Activated CD8-positive, alpha-beta T cell treated with anti-CD3 and anti-CD28 coated beads, Interleukin-2, amount 10 ng/mL, durations not matched to agents 7 days and 5 days (primary cell): ENCODE measurements at regions of chr10 and their contacts with region 1.

Region 1: DNA sequence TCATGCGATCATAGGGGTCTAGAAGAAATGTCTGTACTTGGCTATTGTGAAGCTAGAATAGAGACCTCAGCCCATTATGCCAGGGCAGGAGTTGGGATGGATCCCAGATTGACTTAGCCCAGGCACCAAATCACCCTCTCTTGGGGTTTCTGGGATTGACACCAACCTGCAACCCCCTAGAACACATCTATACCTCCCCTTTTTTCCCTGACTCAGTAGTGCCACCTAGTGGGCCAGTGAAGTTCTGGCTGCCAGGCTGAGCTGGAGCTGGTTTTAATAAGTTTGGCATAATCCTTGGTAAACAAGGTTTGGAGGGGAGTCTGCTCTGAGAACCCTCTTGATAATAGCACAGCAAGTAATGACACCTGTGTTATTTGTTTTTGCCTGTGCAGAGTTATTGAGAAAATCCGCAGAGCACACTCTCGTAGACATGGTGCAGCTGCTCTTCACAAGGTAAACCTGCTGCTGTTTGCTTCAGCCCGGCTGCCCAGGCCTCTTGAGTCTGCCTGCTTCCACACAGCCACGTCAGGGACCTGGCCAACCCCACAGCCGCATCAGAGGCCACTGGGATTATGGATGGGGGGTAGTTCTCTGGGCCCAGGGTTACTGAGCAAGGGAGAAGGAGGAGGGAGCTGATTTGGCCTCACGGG is 43.3 kb upstream of the NFKB2 start:
- DNase-seq: peak; percentile 81
- ATAC-seq: peak; percentile 78
- H3K4me3 Mint-ChIP-seq: no peak overlapping the region
- H3K27ac Mint-ChIP-seq: no peak overlapping the region
- H3K4me1 Mint-ChIP-seq: no peaks in the 10 kb centered on the region
- H3K27me3 Mint-ChIP-seq: no peaks in the 10 kb centered on the region

Region 2: GRCh38 chr10:102167861-102168260 is 184.3 kb before region 1 on chr10:
- CTCF ChIA-PET with region 1: interaction called, 101 read pairs
- POLR2A ChIA-PET with region 1: no interaction called
- DNase-seq: no peak
- ATAC-seq: no peak
- H3K4me3 Mint-ChIP-seq: no peak overlapping the region
- H3K27ac Mint-ChIP-seq: no peak overlapping the region
- H3K4me1 Mint-ChIP-seq: peaks cover 12% of the 10 kb centered on the region
- H3K27me3 Mint-ChIP-seq: no peaks in the 10 kb centered on the region

Region 3: GRCh38 chr10:102268375-102268888 is 83.8 kb before region 1 on chr10:
- CTCF ChIA-PET with region 1: interaction called, 11 read pairs
- POLR2A ChIA-PET with region 1: no interaction called
- DNase-seq: no peak
- ATAC-seq: peak; percentile 39
- H3K4me3 Mint-ChIP-seq: no peak overlapping the region
- H3K27ac Mint-ChIP-seq: peak overlapping the region; percentile 19
- H3K4me1 Mint-ChIP-seq: peaks cover 44% of the 10 kb centered on the region
- H3K27me3 Mint-ChIP-seq: no peaks in the 10 kb centered on the region

Region 4: DNA sequence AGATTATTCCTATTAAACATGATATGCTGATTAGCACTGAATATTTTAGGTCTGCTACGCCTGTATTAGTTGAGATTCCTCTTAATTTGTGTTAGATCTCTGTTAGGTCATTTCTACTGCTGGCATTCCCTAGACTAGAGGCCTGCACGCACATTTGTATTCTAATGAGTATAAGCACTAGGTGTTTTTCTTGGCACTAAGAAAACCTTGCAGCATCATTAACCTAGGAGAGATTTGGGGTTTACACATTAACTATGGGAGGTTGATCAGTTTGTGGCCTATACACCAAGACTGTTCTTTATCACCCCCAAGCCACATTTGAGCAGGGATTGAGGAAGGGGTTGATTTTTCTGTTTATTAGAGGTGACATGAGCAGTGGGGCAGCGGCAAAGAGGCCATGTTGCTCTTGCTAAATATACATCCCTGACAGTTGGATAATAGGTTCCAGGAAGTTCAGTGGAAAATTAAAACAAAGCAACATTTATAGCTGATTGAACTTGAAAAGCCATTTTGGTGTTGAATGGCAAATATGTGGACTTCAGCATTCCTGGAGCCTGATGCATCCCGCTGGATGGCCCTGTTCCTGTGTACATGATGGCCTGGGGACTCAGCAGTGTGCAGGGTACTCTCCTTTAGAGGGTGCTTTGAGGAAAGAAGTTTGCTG is 41.7 kb before region 1 on chr10:
- CTCF ChIA-PET with region 1: interaction called, 23 read pairs
- POLR2A ChIA-PET with region 1: no interaction called
- DNase-seq: no peak
- ATAC-seq: no peak
- H3K4me3 Mint-ChIP-seq: no peak overlapping the region
- H3K27ac Mint-ChIP-seq: no peak overlapping the region
- H3K4me1 Mint-ChIP-seq: peaks cover 33% of the 10 kb centered on the region
- H3K27me3 Mint-ChIP-seq: no peaks in the 10 kb centered on the region

Region 5: GRCh38 chr10:102334101-102334500 is 18.1 kb before region 1 on chr10:
- CTCF ChIA-PET with region 1: interaction called, 23 read pairs
- POLR2A ChIA-PET with region 1: interaction called, 4 read pairs
- DNase-seq: no peak
- ATAC-seq: no peak
- H3K4me3 Mint-ChIP-seq: no peak overlapping the region
- H3K27ac Mint-ChIP-seq: no peak overlapping the region
- H3K4me1 Mint-ChIP-seq: no peaks in the 10 kb centered on the region
- H3K27me3 Mint-ChIP-seq: no peaks in the 10 kb centered on the region

Region 6: DNA sequence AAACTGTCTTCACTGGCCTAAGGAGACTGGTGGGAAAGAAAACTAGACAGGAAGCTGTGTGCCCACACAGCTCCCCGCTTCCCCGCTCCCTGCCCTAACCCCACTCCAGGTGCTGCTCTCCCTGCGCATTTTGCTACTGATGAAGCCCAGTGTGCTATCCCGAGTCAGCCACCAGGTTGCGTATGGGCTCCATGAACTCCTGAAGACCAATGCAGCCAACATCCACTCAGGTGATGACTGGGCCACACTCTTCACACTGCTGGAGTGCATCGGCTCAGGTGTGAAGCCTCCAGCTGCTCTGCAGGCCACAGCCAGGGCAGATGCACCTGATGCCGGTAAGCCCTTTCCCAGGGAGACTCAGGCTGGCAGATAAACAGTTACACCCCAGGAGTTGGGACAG is 23.1 kb after region 1 on chr10:
- CTCF ChIA-PET with region 1: interaction called, 10 read pairs
- POLR2A ChIA-PET with region 1: no interaction called
- DNase-seq: no peak
- ATAC-seq: peak; percentile 57
- H3K4me3 Mint-ChIP-seq: no peak overlapping the region
- H3K27ac Mint-ChIP-seq: no peak overlapping the region
- H3K4me1 Mint-ChIP-seq: no peaks in the 10 kb centered on the region
- H3K27me3 Mint-ChIP-seq: no peaks in the 10 kb centered on the region

Region 7: DNA sequence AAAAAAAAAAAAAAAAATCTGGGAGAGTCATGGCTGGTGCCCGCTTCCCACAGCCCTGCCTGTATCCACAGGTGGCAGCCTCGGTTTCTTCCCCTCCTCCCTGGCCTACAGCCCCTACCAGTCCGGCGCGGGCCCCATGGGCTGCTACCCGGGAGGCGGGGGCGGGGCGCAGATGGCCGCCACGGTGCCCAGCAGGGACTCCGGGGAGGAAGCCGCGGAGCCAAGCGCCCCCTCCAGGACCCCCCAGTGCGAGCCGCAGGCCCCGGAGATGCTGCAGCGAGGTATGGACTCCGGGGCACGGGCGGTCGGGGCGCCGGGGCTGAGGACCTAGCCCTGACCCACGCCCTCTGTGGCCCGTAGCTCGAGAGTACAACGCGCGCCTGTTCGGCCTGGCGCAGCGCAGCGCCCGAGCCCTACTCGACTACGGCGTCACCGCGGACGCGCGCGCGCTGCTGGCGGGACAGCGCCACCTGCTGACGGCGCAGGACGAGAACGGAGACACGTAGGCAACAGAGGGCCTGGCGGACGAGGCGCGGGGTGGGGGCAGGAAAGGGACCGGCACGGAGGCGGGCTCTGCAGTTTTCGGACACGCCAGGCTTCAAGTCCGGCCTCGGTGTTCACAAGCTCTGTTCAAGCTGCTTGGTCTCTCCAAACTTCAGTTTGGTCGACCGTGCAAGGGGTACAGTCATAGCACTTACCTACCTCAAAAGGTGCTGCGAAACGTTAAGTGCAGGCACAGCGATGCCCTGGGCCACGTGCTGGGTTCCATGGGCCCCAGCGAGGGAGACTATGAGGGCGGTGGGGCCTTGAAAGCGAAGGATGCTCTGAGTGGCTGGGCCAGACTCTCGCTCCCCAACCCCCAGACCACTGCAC is 47.3 kb after region 1 on chr10:
- CTCF ChIA-PET with region 1: interaction called, 11 read pairs
- POLR2A ChIA-PET with region 1: no interaction called
- DNase-seq: peak; percentile 92
- ATAC-seq: peak; percentile 63
- H3K4me3 Mint-ChIP-seq: peak overlapping the region; percentile 56
- H3K27ac Mint-ChIP-seq: peak overlapping the region; percentile 78
- H3K4me1 Mint-ChIP-seq: peaks cover 39% of the 10 kb centered on the region
- H3K27me3 Mint-ChIP-seq: no peaks in the 10 kb centered on the region